Common myeloid progenitor, CD34-positive (primary cell): ENCODE measurements at regions of chr5 and their contacts with region 1.

Region 1: GRCh38 chr5:139422307-139422893 is 16.9 kb downstream of the DNAJC18 start:
- DNase-seq: peak; percentile 77 to 90 (median 88)
- H3K4me3 ChIP-seq: no peak overlapping the region
- H3K27ac ChIP-seq: no peak overlapping the region
- H3K4me1 ChIP-seq: peaks cover 0 to 28% (median 22%) of the 10 kb centered on the region in 4 experiments
- H3K27me3 ChIP-seq: no peaks in the 10 kb centered on the region

Region 2: DNA sequence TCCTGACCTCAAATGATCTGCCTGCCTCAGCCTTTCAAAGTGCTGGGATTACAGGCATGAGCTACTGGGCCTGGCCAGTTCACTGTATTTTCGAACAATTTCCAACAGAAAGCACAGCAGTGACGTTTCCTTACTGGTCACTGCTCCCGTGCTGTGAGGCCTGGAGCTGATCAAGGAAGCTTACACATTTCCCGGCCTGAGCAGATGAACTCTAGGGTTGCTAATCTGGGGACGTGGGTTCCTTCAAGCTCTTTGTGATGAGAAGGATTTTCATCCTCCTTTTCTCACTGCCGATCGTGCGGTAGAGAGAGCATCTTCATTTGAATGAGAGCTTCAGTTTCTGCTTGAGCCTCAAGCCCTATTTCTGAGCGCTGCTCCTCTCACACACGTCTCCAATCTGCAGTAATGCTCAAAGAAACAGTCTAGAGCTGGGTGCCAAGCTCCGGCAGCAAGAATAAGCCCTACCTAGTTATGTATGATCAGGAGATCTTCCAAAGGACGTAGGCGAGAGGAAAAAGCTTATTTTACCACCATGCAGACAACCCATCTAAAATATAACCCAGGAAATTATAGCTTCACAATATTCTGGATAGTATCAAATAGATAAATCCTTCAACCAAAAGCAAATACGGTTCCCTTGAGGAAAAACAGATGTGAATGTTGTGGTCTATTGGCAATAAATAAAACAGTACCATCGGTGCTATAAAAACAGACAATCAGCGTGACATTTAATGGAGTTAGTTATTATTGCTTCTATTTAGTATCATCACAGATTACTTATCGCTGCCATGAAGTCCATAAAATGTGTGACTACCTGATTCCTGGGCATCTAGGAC is 11.2 kb before region 1 on chr5:
- CTCF ChIA-PET with region 1: interaction called, 53 read pairs
- POLR2A ChIA-PET with region 1: no interaction called
- DNase-seq: no peak
- H3K4me3 ChIP-seq: no peak overlapping the region
- H3K27ac ChIP-seq: no peak overlapping the region
- H3K4me1 ChIP-seq: peaks cover 3 to 28% (median 13%) of the 10 kb centered on the region in 4 experiments
- H3K27me3 ChIP-seq: no peaks in the 10 kb centered on the region

Region 3: GRCh38 chr5:139468421-139468931 is 46.1 kb after region 1 on chr5:
- CTCF ChIA-PET with region 1: interaction called, 44 read pairs
- POLR2A ChIA-PET with region 1: no interaction called
- DNase-seq: no peak
- H3K4me3 ChIP-seq: no peak overlapping the region
- H3K27ac ChIP-seq: no peak overlapping the region
- H3K4me1 ChIP-seq: peaks cover 3 to 53% (median 48%) of the 10 kb centered on the region in 4 experiments
- H3K27me3 ChIP-seq: no peaks in the 10 kb centered on the region

Region 4: DNA sequence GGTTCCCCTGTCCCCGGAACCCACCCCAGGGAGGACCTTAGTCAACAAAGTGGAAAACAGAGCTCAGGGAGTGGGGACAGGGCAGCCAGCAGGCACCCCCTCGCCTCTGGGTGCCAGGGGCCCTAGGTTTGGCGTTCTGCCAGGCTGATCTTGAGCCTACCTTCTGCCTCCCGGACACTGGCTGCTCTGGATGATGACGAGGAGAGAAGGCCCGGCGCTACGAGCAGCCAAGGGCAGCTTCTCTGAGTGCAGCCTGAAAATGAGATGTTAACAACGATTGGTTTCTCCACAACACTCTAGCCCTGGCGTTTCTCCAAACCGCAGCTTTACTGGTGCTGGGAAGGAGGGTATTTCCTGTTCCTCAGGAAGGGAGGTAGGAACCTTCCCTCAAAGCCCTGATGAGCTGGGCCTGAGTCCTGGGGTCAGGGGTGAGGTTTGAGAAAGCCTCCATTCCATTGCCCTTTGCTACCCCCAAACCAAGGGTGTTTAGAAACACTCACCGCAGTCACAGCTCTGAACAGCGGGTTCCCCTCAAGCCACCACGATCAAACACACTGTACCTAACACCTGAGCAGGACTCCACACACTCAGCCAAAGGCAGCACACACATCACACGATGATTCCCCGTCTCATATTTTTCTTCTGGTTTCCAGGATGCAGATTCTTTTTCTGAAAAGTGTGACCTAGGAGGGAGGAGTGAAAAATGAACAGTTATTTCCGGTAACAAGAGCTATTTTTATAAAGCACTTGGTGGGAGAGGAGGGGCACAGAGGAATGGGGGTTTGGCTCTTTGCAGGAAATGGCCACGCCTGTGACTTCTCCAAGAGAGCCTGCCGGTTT is 59.9 kb after region 1 on chr5 and contains the start of gene STING1:
- CTCF ChIA-PET with region 1: interaction called, 44 read pairs
- POLR2A ChIA-PET with region 1: interaction called, 3 read pairs
- DNase-seq: peak; percentile 86 to 93 (median 92)
- H3K4me3 ChIP-seq: peak within 1 kb of the TSS; percentile 40 to 89 (median 79)
- H3K27ac ChIP-seq: peak within 1 kb of the TSS; percentile 81 to 91
- H3K4me1 ChIP-seq: peaks cover 12 to 71% (median 59%) of the 10 kb centered on the region in 4 experiments
- H3K27me3 ChIP-seq: no peaks in the 10 kb centered on the region

Region 5: GRCh38 chr5:139517683-139518564 is 95.5 kb after region 1 on chr5:
- CTCF ChIA-PET with region 1: interaction called, 359 read pairs
- POLR2A ChIA-PET with region 1: interaction called, 7 read pairs
- DNase-seq: peak; percentile 77 to 89 (median 88)
- H3K4me3 ChIP-seq: peak overlapping the region; percentile 51 to 83 (median 60)
- H3K27ac ChIP-seq: peak overlapping the region in 1 of 2 experiments; percentile 74
- H3K4me1 ChIP-seq: peaks cover 2 to 26% (median 19%) of the 10 kb centered on the region in 4 experiments
- H3K27me3 ChIP-seq: no peaks in the 10 kb centered on the region